Sciatic nerve (tissue), 2 donors: ENCODE measurements at regions of chr15 and their contacts with region 1.

Region 1: GRCh38 chr15:92538115-92538514 is 117.5 kb downstream of the FAM174B start:
- DNase-seq: no peak
- ATAC-seq: no peak

Region 2: GRCh38 chr15:92864127-92864814 is 326.2 kb after region 1 on chr15:
- intact Hi-C with region 1: no loop called
- DNase-seq: no peak
- ATAC-seq: no peak

Region 3: GRCh38 chr15:93562395-93563123 is 1024.4 kb after region 1 on chr15:
- intact Hi-C with region 1: loop called (anchors 5 kb)
- DNase-seq: no peak
- ATAC-seq: peak; percentile 81